Activated CD8-positive, alpha-beta T cell treated with anti-CD3 and anti-CD28 coated beads for 36 hours (primary cell): ENCODE measurements at regions of chr2 and their contacts with region 1.

Region 1: DNA sequence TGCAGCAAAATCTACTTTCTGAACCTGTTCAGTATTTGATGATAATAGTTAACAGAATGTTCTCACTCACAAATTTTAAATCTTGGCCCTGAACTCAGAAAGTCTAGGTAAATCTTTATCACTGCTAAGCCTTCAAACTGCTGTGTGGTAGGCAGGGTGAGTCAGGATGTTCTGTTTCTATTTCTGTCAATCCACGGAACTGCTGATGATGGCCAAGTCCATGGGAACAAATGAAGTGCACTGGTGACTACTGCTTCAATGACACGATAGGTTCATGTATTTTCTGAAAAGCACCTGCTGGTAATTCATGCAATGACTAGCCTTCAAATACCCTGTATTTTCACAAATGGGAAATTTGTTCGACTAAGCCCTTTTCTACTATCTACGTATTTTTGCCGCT is 14.2 kb downstream of the NIFK start:
- DNase-seq: peak; percentile 46
- ATAC-seq: peak; percentile 87
- H3K4me3 Mint-ChIP-seq: no peak overlapping the region
- H3K27ac Mint-ChIP-seq: peak overlapping the region; percentile 21
- H3K4me1 Mint-ChIP-seq: peaks cover 17% of the 10 kb centered on the region
- H3K27me3 Mint-ChIP-seq: no peaks in the 10 kb centered on the region
- CTCF ChIP-seq: no peak

Region 2: GRCh38 chr2:121400201-121400600 is 322.3 kb before region 1 on chr2:
- CTCF ChIA-PET with region 1: interaction called, 12 read pairs
- POLR2A ChIA-PET with region 1: no interaction called
- intact Hi-C with region 1: loop called (anchors 2 kb)
- DNase-seq: no peak
- ATAC-seq: no peak
- H3K4me3 Mint-ChIP-seq: no peak overlapping the region
- H3K27ac Mint-ChIP-seq: no peak overlapping the region
- H3K4me1 Mint-ChIP-seq: no peaks in the 10 kb centered on the region
- H3K27me3 Mint-ChIP-seq: no peaks in the 10 kb centered on the region
- CTCF ChIP-seq: no peak

Region 3: DNA sequence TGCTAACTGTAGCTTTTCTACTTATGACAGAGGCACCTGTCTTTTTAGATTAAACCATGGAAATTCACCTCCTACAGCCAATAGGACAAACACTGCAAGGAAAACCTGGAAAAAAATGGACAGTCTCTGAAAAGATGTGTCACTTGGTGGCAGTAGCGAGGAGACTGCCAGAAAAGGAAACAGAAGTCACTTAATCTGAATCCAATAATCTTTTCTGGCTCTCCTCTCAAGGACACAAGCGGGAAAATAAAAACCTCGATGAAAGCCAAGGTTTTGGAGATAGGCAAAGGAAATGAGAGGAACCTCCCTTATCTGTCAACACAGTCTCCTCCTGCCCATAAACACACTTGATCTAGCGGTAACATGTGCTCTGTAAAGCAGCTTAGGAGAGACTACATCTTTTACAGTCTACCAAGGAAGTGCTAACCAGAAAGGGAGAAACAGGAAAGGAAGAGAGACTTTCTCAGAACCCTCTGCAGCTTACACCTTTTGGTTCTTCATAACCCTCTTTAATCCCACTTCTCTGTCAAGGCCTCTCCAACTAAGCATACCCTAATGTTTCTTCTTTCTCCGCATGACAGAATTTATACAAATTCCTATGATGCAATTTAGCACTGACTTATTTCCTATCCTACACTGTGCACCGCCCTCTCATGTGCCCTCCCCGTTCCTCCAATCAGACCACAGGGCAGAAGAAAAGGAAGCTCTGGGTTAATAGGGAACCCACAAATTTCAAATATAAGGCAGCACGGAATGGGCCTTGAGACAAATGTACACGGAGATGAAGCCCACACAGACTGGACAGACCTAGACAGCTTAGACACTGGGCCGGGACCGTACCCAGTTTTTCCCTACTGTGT is 126.0 kb before region 1 on chr2:
- CTCF ChIA-PET with region 1: interaction called, 11 read pairs
- POLR2A ChIA-PET with region 1: no interaction called
- intact Hi-C with region 1: loop called (anchors 10 kb)
- DNase-seq: peak; percentile 60
- ATAC-seq: peak; percentile 92
- H3K4me3 Mint-ChIP-seq: peak overlapping the region; percentile 77
- H3K27ac Mint-ChIP-seq: peak overlapping the region; percentile 94
- H3K4me1 Mint-ChIP-seq: peaks cover 47% of the 10 kb centered on the region
- H3K27me3 Mint-ChIP-seq: no peaks in the 10 kb centered on the region
- CTCF ChIP-seq: no peak

Region 4: GRCh38 chr2:121649596-121650314 is 72.7 kb before region 1 on chr2:
- CTCF ChIA-PET with region 1: interaction called, 4 read pairs
- POLR2A ChIA-PET with region 1: no interaction called
- intact Hi-C with region 1: loop called (anchors 5 kb)
- DNase-seq: peak; percentile 97
- ATAC-seq: peak; percentile 96
- H3K4me3 Mint-ChIP-seq: peak overlapping the region; percentile 93
- H3K27ac Mint-ChIP-seq: peak overlapping the region; percentile 98
- H3K4me1 Mint-ChIP-seq: peaks cover 64% of the 10 kb centered on the region
- H3K27me3 Mint-ChIP-seq: no peaks in the 10 kb centered on the region
- CTCF ChIP-seq: no peak

Region 5: DNA sequence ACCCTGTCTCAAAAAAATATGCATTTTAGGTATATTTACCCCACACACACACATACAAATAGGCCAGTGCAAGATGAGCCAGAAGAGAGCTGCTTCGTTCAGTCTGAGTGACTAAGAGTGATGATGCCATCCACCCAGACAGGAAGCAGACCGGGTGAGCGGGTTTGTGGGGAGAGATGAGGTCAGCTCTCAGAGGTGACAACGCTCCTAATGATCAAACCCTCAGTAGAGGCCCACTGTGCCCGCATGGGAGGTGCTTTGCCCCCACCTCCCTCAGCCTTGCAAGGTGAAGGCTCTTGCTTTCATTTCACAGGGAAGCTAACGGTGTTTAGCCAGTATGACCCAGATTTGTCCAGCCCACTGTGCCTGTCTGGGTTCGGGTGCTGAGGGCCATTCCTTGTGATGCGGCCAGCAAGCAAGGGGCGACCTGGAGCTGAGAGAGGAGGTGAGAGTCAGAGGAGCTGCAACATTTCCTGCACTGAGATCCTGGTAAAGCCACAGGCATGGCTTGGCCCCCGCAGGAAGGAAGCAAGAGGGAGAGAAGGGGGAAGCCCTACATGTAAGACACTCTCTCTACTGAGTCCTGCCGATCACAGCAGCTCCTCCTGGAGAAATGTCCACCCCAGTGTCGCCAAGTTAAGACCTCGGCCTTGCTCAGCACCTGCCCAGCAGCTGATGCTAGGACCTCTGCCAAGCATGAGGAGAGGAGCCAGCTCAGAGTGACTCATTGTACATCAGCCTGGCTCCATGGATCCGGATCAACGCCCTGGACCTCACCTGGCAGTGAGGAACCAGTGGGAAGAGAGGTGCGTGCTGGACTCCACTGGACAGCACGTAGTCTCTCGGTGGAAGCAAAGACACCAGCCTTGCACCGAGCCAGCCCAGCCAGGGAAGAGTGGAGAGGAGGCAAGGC is 22.8 kb before region 1 on chr2:
- CTCF ChIA-PET with region 1: interaction called, 16 read pairs
- POLR2A ChIA-PET with region 1: interaction called, 4 read pairs
- intact Hi-C with region 1: no loop called
- DNase-seq: peak; percentile 97
- ATAC-seq: peak; percentile 97
- H3K4me3 Mint-ChIP-seq: peak overlapping the region; percentile 71
- H3K27ac Mint-ChIP-seq: peak overlapping the region; percentile 93
- H3K4me1 Mint-ChIP-seq: peaks cover 42% of the 10 kb centered on the region
- H3K27me3 Mint-ChIP-seq: no peaks in the 10 kb centered on the region
- CTCF ChIP-seq: no peak